ENCODE measurements at regions of chr1 and their contacts with region 1.

Region 1: GRCh38 chr1:24642481-24643361 is at the start of gene SRRM1:
- DNase-seq: peak; percentile 99
- ATAC-seq: peak; percentile 93
- H3K4me3 Mint-ChIP-seq: peak within 1 kb of the TSS; percentile 80
- H3K27ac Mint-ChIP-seq: peak within 1 kb of the TSS; percentile 98
- H3K4me1 Mint-ChIP-seq: peaks cover 54% of the 10 kb centered on the region
- H3K27me3 Mint-ChIP-seq: no peaks in the 10 kb centered on the region
- total RNA-seq, gene SRRM1: 234 to 288 TPM

Region 2: GRCh38 chr1:23800400-23801337 is 842.1 kb before region 1 on chr1 and contains the start of gene GALE:
- CTCF ChIA-PET with region 1: no interaction called
- POLR2A ChIA-PET with region 1: no interaction called
- intact Hi-C with region 1: loop called in 1 of 2 experiments (anchors 1 kb)
- DNase-seq: peak; percentile 99
- ATAC-seq: peak; percentile 84
- H3K4me3 Mint-ChIP-seq: peak within 1 kb of the TSS; percentile 86
- H3K27ac Mint-ChIP-seq: peak within 1 kb of the TSS; percentile 84
- H3K4me1 Mint-ChIP-seq: peaks cover 13% of the 10 kb centered on the region
- H3K27me3 Mint-ChIP-seq: no peaks in the 10 kb centered on the region
- total RNA-seq, gene GALE: 27.4 to 35.6 TPM

Region 3: GRCh38 chr1:24186993-24187805 is 455.5 kb before region 1 on chr1 and contains the start of gene IFNLR1:
- CTCF ChIA-PET with region 1: interaction called, 4 read pairs
- POLR2A ChIA-PET with region 1: no interaction called
- intact Hi-C with region 1: loop called in 1 of 2 experiments (anchors 1 kb)
- DNase-seq: peak; percentile 93
- ATAC-seq: peak; percentile 88
- H3K4me3 Mint-ChIP-seq: peak within 1 kb of the TSS; percentile 73
- H3K27ac Mint-ChIP-seq: peak within 1 kb of the TSS; percentile 71
- H3K4me1 Mint-ChIP-seq: peaks cover 47% of the 10 kb centered on the region
- H3K27me3 Mint-ChIP-seq: no peaks in the 10 kb centered on the region
- total RNA-seq, gene IFNLR1: 6.6 to 7.4 TPM

Region 4: DNA sequence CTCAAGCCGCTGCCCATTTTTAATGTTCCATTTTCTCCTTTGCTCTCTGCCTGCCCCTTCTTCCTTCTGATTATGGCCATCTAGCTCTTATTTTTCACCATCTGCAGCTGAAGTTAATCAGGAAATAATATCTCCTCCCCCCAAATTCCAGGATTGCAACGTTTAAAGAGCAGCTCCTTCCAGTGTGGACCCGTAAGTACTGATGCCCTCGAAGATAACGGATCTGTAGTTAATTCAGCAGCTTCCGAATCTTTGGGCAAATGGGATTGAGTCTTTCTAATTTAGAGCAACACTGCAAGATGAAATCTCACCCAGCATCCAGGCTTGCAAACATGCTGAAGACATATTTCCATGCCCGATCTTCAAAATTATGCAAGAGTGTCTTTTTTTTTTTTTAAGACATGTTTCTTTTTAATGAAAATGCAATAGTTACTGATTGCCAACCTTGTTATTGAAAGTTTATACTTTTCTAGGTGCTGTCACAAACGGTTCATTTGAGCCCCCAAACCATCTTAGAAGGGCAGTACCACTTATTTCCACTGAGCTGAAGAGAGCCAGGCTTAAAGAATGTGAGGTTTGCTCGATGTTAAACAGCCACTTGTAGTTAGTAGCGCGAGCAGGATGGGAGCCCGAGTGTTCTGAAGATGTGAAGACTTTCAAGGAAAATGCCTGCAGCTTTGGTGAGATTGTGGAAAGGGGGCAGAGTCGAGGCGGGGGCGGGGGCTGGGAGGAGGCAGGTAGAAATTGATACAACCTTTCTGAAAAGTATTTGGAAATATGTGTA is 151.0 kb before region 1 on chr1:
- CTCF ChIA-PET with region 1: no interaction called
- POLR2A ChIA-PET with region 1: no interaction called
- intact Hi-C with region 1: loop called in 1 of 2 experiments (anchors 2 kb)
- DNase-seq: no peak
- ATAC-seq: no peak
- H3K4me3 Mint-ChIP-seq: no peak overlapping the region
- H3K27ac Mint-ChIP-seq: no peak overlapping the region
- H3K4me1 Mint-ChIP-seq: peaks cover 45% of the 10 kb centered on the region
- H3K27me3 Mint-ChIP-seq: no peaks in the 10 kb centered on the region

Region 5: DNA sequence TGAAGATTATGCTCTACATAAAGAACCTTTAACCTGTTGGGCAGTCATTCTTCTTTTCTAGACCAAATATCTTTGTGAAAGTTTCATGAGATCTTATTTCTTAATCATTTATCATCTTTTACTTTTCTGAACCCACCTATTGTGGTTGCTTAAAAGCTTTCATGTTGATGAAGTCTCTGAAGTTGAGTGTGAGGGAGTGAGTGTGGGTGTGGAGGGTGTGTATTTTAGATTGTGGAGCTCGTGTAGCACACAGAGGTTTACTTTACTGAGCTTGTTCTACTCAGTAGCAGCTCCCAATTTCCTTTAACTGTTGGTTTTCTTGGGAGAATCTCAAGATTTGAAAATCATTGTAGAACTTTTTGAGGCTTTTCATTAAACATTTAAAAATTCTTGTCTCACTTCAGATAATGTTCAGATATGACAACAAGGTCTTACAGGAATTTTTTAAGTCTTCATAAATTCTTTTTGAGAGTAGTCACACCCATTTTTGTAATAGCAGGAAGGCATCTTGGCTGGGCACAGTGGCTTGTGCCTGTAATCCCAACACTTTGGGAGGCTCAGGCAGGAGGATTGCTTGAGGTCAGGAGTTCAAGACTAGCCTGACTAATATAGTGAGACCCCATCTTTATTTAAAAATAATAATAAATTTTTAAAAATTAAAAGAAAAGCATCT is 17.4 kb after region 1 on chr1:
- CTCF ChIA-PET with region 1: interaction called, 7 read pairs
- POLR2A ChIA-PET with region 1: interaction called, 3 read pairs
- intact Hi-C with region 1: loop called in 1 of 2 experiments (anchors 1 kb)
- DNase-seq: no peak
- ATAC-seq: no peak
- H3K4me3 Mint-ChIP-seq: no peak overlapping the region
- H3K27ac Mint-ChIP-seq: peak overlapping the region; percentile 72
- H3K4me1 Mint-ChIP-seq: peaks cover 31% of the 10 kb centered on the region
- H3K27me3 Mint-ChIP-seq: no peaks in the 10 kb centered on the region

Region 6: GRCh38 chr1:24673336-24673735 is 30.6 kb after region 1 on chr1:
- CTCF ChIA-PET with region 1: no interaction called
- POLR2A ChIA-PET with region 1: no interaction called
- intact Hi-C with region 1: no loop called
- DNase-seq: no peak
- ATAC-seq: no peak
- H3K4me3 Mint-ChIP-seq: no peak overlapping the region
- H3K27ac Mint-ChIP-seq: peak overlapping the region; percentile 30
- H3K4me1 Mint-ChIP-seq: no peaks in the 10 kb centered on the region
- H3K27me3 Mint-ChIP-seq: no peaks in the 10 kb centered on the region

Region 7: GRCh38 chr1:25232027-25232865 is 589.5 kb after region 1 on chr1 and contains the start of gene SYF2:
- CTCF ChIA-PET with region 1: no interaction called
- POLR2A ChIA-PET with region 1: no interaction called
- intact Hi-C with region 1: loop called in 1 of 2 experiments (anchors 1 kb)
- DNase-seq: peak; percentile 92
- ATAC-seq: peak; percentile 92
- H3K4me3 Mint-ChIP-seq: no peak within 1 kb of the TSS
- H3K27ac Mint-ChIP-seq: no peak within 1 kb of the TSS
- H3K4me1 Mint-ChIP-seq: peaks cover 26% of the 10 kb centered on the region
- H3K27me3 Mint-ChIP-seq: no peaks in the 10 kb centered on the region
- total RNA-seq, gene SYF2: 39.0 to 42.4 TPM

Region 8: DNA sequence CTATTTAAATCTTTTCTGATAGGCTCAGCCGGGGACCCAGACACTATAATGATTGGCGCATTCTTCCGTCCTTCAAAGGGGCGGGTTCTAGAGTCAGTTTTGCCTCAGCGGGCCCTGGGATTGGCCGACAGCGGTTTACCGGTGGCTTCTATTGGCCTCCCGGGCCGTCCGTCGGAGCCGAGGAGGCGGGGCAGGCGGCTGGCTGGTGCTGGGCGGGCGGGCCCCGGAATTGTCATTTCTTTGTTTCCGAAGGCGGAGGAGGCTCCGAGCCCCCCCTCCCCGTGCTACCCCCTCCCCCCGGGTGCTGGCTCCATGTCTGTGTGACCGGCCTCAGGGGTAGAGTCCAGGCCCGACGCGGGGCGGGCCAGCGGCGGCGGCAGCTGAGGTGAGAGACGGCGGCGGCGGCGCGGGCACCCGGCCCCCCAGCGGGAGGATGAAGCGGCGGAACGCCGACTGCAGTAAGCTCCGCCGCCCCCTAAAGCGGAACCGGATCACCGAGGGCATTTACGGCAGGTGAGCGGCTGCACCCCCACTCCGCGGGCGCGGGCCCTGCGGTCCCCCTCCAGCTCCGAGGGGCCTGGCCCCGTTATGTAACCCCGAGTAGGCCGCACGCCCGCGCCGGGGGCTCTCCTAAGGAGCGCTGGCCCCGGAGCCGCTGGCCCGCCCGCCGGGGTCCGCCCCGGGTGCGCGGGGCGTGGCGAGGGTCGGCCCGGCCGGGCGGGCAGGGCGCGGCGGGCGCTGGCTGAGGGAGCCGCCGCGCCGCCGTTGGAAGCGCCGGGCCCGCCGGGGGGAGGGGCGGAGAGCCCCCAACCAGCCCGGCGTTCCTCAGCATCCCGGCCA is 788.2 kb after region 1 on chr1 and contains the start of gene MACO1:
- CTCF ChIA-PET with region 1: no interaction called
- POLR2A ChIA-PET with region 1: no interaction called
- intact Hi-C with region 1: loop called in 1 of 2 experiments (anchors 2 kb)
- DNase-seq: peak; percentile 98
- ATAC-seq: peak; percentile 93
- H3K4me3 Mint-ChIP-seq: peak within 1 kb of the TSS; percentile 93
- H3K27ac Mint-ChIP-seq: peak within 1 kb of the TSS; percentile 99
- H3K4me1 Mint-ChIP-seq: peaks cover 47% of the 10 kb centered on the region
- H3K27me3 Mint-ChIP-seq: no peaks in the 10 kb centered on the region
- total RNA-seq, gene MACO1: 15.7 to 18.5 TPM